Naive thymus-derived CD4-positive, alpha-beta T cell (primary cell): ENCODE measurements at regions of chr18 and their contacts with region 1.

Region 1: DNA sequence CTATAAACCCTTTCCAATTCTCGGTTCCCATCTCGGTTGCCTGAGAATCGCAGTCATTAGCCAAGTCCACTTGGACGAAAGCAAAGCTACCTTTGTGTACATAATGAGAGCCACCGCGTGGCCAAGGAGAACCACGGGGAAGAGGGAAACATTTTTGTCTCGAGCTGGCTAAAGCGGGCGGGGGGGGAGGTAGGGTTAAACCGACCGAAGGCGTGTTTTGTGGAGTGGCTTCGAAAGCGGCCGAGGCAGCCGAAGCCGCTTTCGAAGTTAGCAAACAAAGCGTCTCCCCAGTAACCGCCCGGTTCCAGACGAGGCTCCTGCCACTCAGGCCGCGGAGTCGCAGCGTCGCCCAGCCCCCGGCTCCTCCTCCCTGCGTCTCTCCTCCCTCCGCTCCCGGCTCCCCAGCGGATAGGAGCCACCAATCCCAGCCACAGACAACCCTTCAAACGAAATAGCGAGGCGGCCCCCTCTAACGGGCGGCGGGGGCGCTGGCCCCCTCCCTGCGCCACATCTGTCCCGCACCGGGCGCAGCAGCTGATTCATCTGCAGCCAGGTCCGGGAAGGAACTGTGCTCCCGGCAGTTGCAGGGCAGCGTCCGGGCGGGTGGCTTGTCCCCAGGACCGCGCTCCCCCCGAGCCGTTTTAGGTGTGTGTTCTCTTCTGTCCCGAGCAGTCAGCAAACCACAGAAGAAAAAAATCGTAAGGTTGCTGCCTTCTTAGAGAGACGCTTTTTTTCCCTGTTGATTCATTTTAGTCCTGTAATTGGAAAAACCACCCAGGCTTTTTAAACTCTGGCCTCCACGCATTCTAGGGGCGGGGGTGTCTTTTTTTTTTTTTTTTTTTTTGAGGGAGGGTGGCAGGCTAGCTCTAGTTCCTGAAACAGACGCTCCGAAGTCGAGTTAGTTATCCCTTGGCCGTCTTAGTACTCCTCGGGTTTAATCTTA is 1.8 kb upstream of the TGIF1 start:
- DNase-seq: peak; percentile 73 to 89 (median 84)
- ATAC-seq: peak; percentile 73
- H3K4me3 ChIP-seq: peak overlapping the region; percentile 78
- H3K4me3 Mint-ChIP-seq: peak overlapping the region; percentile 85 to 97 (median 96)
- H3K27ac ChIP-seq: peak overlapping the region; percentile 96
- H3K27ac Mint-ChIP-seq: peak overlapping the region; percentile 96 to 100 (median 99)
- H3K4me1 ChIP-seq: peaks cover 13% of the 10 kb centered on the region in 2 donors
- H3K4me1 Mint-ChIP-seq: peaks cover 5 to 35% (median 23%) of the 10 kb centered on the region in 7 donors
- H3K27me3 ChIP-seq: no peaks in the 10 kb centered on the region
- H3K27me3 Mint-ChIP-seq: peaks cover 0 to 1% (median 0%) of the 10 kb centered on the region in 5 donors

Region 2: GRCh38 chr18:2571200-2572143 is 876.7 kb before region 1 on chr18 and contains the starts of genes METTL4 and NDC80:
- CTCF ChIA-PET with region 1: no interaction called
- POLR2A ChIA-PET with region 1: interaction called, 4 read pairs
- intact Hi-C with region 1: loop called in 1 of 2 experiments (anchors 5 kb)
- DNase-seq: peak; percentile 70 to 90 (median 82)
- ATAC-seq: peak; percentile 87
- H3K4me3 ChIP-seq: peak within 1 kb of the TSS; percentile 88
- H3K4me3 Mint-ChIP-seq: peak within 1 kb of the TSS; percentile 96 to 100 (median 99)
- H3K27ac ChIP-seq: peak within 1 kb of the TSS; percentile 97
- H3K27ac Mint-ChIP-seq: peak within 1 kb of the TSS; percentile 98 to 100 (median 100)
- H3K4me1 ChIP-seq: peaks cover 10 to 13% of the 10 kb centered on the region in 2 donors
- H3K4me1 Mint-ChIP-seq: peaks cover 38 to 63% (median 59%) of the 10 kb centered on the region in 7 donors
- H3K27me3 ChIP-seq: no peaks in the 10 kb centered on the region
- H3K27me3 Mint-ChIP-seq: no peaks in the 10 kb centered on the region
- total RNA-seq, gene METTL4: 13.8 to 32.5 (median 22.8) TPM
- total RNA-seq, gene NDC80: 2.4 to 53.6 (median 2.7) TPM

Region 3: GRCh38 chr18:2978646-2979045 is 469.5 kb before region 1 on chr18:
- CTCF ChIA-PET with region 1: interaction called, 3 read pairs
- POLR2A ChIA-PET with region 1: interaction called, 5 read pairs
- intact Hi-C with region 1: loop called in 1 of 2 experiments (anchors 5 kb)
- DNase-seq: no peak
- ATAC-seq: no peak
- H3K4me3 ChIP-seq: peak overlapping the region; percentile 69
- H3K4me3 Mint-ChIP-seq: peak overlapping the region; percentile 34 to 94 (median 84)
- H3K27ac ChIP-seq: peak overlapping the region; percentile 76
- H3K27ac Mint-ChIP-seq: peak overlapping the region; percentile 83 to 98 (median 91)
- H3K4me1 ChIP-seq: peaks cover 48 to 57% of the 10 kb centered on the region in 2 donors
- H3K4me1 Mint-ChIP-seq: peaks cover 57 to 85% (median 76%) of the 10 kb centered on the region in 7 donors
- H3K27me3 ChIP-seq: no peaks in the 10 kb centered on the region
- H3K27me3 Mint-ChIP-seq: no peaks in the 10 kb centered on the region

Region 4: GRCh38 chr18:3261371-3262246 is 186.6 kb before region 1 on chr18 and contains the start of gene MYL12B:
- CTCF ChIA-PET with region 1: interaction called, 3 read pairs
- POLR2A ChIA-PET with region 1: interaction called, 14 read pairs
- intact Hi-C with region 1: loop called (anchors 1 to 2 kb)
- DNase-seq: peak; percentile 72 to 88 (median 84)
- ATAC-seq: peak; percentile 87
- H3K4me3 ChIP-seq: peak within 1 kb of the TSS; percentile 81
- H3K4me3 Mint-ChIP-seq: peak within 1 kb of the TSS; percentile 87 to 100 (median 96)
- H3K27ac ChIP-seq: peak within 1 kb of the TSS; percentile 96
- H3K27ac Mint-ChIP-seq: peak within 1 kb of the TSS; percentile 95 to 100 (median 99)
- H3K4me1 ChIP-seq: peaks cover 54 to 66% of the 10 kb centered on the region in 2 donors
- H3K4me1 Mint-ChIP-seq: peaks cover 48 to 87% (median 83%) of the 10 kb centered on the region in 7 donors
- H3K27me3 ChIP-seq: no peaks in the 10 kb centered on the region
- H3K27me3 Mint-ChIP-seq: no peaks in the 10 kb centered on the region
- total RNA-seq, gene MYL12B: 140 to 300 (median 169) TPM

Region 5: GRCh38 chr18:3411854-3412268 is 36.3 kb before region 1 on chr18:
- CTCF ChIA-PET with region 1: interaction called, 6 read pairs
- POLR2A ChIA-PET with region 1: interaction called, 12 read pairs
- intact Hi-C with region 1: loop called in 1 of 2 experiments (anchors 1 kb)
- DNase-seq: peak in 7 of 9 donors; percentile 7 to 28 (median 16)
- ATAC-seq: peak; percentile 50
- H3K4me3 ChIP-seq: peak overlapping the region; percentile 42
- H3K4me3 Mint-ChIP-seq: peak overlapping the region; percentile 41 to 78 (median 52)
- H3K27ac ChIP-seq: no peak overlapping the region
- H3K27ac Mint-ChIP-seq: peak overlapping the region in 3 of 9 donors; percentile 38 to 81 (median 70)
- H3K4me1 ChIP-seq: peaks cover 0 to 6% of the 10 kb centered on the region in 2 donors
- H3K4me1 Mint-ChIP-seq: peaks cover 0 to 21% (median 10%) of the 10 kb centered on the region in 7 donors
- H3K27me3 ChIP-seq: no peaks in the 10 kb centered on the region
- H3K27me3 Mint-ChIP-seq: no peaks in the 10 kb centered on the region

Region 6: DNA sequence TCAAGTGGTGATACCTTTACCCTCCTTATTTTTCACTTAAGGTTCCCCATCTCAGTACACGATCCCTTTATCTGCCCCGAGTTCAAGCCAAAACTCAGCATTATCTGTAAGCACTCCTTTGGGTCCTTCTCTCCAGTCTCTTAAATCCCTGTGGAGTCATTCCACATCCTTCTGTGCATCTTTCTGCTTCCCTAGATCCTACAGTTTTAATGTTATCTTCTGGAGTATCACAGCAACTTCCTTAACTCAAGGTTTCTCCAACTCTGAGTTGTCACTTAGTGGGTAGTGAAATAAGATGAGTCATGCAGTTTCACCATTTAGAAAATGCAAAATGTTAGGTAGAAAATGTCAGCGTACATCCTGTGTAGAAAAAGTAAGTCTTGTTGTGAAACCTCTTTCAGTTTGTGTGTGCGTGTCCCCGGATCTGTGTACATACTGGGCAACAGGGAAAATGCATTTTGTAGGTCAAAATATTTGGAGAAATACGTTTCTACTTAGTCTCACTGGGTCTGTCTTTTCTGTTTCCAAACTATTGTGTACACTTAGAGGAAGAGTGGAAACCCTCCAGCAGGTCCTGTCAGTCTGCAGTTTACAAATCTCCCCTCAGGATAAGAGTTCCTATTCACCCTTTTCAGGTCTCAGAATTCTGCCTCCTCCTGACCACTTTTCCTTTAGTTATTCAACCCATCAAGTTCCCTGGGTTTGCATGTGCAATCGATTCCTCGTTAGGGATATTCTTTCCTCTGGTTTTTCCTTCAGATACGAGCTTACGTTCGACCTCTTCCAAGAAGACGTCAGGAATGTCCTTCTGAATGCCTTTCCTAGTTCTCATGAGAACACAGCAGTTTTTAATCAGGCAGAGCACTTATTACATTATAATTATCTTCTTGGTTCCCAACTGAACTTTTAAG is 156.6 kb after region 1 on chr18:
- CTCF ChIA-PET with region 1: interaction called, 5 read pairs
- POLR2A ChIA-PET with region 1: interaction called, 11 read pairs
- intact Hi-C with region 1: loop called in 1 of 2 experiments (anchors 1 kb)
- DNase-seq: peak in 6 of 9 donors; percentile 20 to 55 (median 48)
- ATAC-seq: peak; percentile 71
- H3K4me3 ChIP-seq: peak overlapping the region; percentile 43
- H3K4me3 Mint-ChIP-seq: no peak overlapping the region
- H3K27ac ChIP-seq: peak overlapping the region; percentile 52
- H3K27ac Mint-ChIP-seq: no peak overlapping the region
- H3K4me1 ChIP-seq: peaks cover 32 to 38% of the 10 kb centered on the region in 2 donors
- H3K4me1 Mint-ChIP-seq: peaks cover 0 to 27% (median 7%) of the 10 kb centered on the region in 7 donors
- H3K27me3 ChIP-seq: no peaks in the 10 kb centered on the region
- H3K27me3 Mint-ChIP-seq: no peaks in the 10 kb centered on the region

Region 7: GRCh38 chr18:3652380-3653262 is 204.5 kb after region 1 on chr18:
- CTCF ChIA-PET with region 1: no interaction called
- POLR2A ChIA-PET with region 1: no interaction called
- intact Hi-C with region 1: no loop called
- DNase-seq: peak in 1 of 9 donors; percentile 68
- ATAC-seq: peak; percentile 78
- H3K4me3 ChIP-seq: no peak overlapping the region
- H3K4me3 Mint-ChIP-seq: no peak overlapping the region
- H3K27ac ChIP-seq: peak overlapping the region; percentile 12
- H3K27ac Mint-ChIP-seq: peak overlapping the region in 2 of 9 donors; percentile 36 to 49
- H3K4me1 ChIP-seq: no peaks in the 10 kb centered on the region
- H3K4me1 Mint-ChIP-seq: peaks cover 2 to 45% (median 7%) of the 10 kb centered on the region in 7 donors
- H3K27me3 ChIP-seq: no peaks in the 10 kb centered on the region
- H3K27me3 Mint-ChIP-seq: no peaks in the 10 kb centered on the region